Right ventricle myocardium inferior (tissue), 1 donor: ENCODE measurements at regions of chr2 and their contacts with region 1.

Region 1: GRCh38 chr2:21800356-21800755 is 676.6 kb downstream of the TDRD15 start:
- DNase-seq: peak; percentile 9
- ATAC-seq: no peak

Region 2: DNA sequence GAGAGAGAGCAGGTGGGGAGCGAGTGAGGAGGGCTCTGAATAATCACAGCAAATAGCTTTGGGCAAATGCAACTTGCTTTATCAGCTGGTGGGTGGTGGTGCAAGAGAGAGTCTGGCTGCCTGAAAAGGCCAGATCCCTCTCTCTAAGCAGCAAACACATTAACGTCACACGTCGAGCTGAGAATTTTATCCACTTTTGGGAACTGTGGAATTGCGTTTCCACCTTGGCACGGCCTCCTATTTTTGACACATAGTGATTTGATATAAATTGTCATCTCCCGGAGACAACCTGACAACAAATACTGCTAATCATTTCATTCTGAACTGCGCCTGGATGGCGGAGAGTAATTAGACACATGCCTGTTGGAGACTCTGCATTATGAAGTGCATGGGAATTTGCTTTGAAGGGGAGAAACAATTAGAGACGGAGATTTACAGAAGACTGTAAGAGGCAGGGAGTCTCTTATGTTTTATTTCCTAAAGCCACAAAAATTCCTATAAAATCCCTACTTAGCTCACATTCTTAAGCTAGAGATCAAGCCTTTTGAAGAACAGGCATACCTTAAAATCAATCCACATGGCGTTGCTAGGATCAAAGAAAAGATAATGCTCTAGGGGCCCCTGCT is 42.4 kb before region 1 on chr2:
- intact Hi-C with region 1: loop called (anchors 1 kb)
- DNase-seq: no peak
- ATAC-seq: peak; percentile 90